Activated CD4-positive, alpha-beta T cell treated with anti-CD3 and anti-CD28 coated beads for 36 hours (primary cell): ENCODE measurements at regions of chr3 and their contacts with region 1.

Region 1: DNA sequence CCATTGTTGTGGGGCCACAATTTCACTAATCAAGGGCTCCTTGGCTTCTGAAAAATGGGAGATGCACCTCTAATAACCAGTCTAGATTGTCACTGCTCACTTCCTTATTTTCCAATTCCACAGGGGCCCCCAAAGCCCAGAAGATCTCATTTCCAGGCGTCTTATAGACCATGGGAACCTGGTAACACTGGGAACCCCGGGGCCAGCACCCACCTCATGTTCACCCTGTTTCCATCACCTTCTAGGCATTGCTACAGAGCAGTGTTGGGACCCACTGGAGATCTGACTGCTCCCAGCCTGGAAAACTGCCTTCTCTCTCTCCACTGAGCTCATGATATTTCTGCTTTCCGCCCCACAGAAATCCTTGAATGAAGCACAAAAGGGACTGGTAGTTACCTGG is 61.5 kb downstream of the TFRC start:
- DNase-seq: no peak
- ATAC-seq: no peak
- H3K4me3 Mint-ChIP-seq: no peak overlapping the region
- H3K27ac Mint-ChIP-seq: no peak overlapping the region
- H3K4me1 Mint-ChIP-seq: peaks cover 2% of the 10 kb centered on the region
- H3K27me3 Mint-ChIP-seq: peaks cover 2% of the 10 kb centered on the region

Region 2: GRCh38 chr3:196198771-196199753 is 178.7 kb after region 1 on chr3:
- CTCF ChIA-PET with region 1: interaction called, 7 read pairs
- POLR2A ChIA-PET with region 1: no interaction called
- intact Hi-C with region 1: loop called (anchors 1 to 2 kb)
- DNase-seq: no peak
- ATAC-seq: no peak
- H3K4me3 Mint-ChIP-seq: no peak overlapping the region
- H3K27ac Mint-ChIP-seq: no peak overlapping the region
- H3K4me1 Mint-ChIP-seq: peaks cover 7% of the 10 kb centered on the region
- H3K27me3 Mint-ChIP-seq: no peaks in the 10 kb centered on the region

Region 3: GRCh38 chr3:196357905-196358304 is 337.5 kb after region 1 on chr3:
- CTCF ChIA-PET with region 1: no interaction called
- POLR2A ChIA-PET with region 1: no interaction called
- intact Hi-C with region 1: no loop called
- DNase-seq: no peak
- ATAC-seq: no peak
- H3K4me3 Mint-ChIP-seq: no peak overlapping the region
- H3K27ac Mint-ChIP-seq: no peak overlapping the region
- H3K4me1 Mint-ChIP-seq: peaks cover 9% of the 10 kb centered on the region
- H3K27me3 Mint-ChIP-seq: no peaks in the 10 kb centered on the region